ENCODE measurements at regions of chr20 and their contacts with region 1.

Region 1: GRCh38 chr20:46013826-46014516 is 5.3 kb downstream of the MMP9 start:
- DNase-seq: no peak

Region 2: DNA sequence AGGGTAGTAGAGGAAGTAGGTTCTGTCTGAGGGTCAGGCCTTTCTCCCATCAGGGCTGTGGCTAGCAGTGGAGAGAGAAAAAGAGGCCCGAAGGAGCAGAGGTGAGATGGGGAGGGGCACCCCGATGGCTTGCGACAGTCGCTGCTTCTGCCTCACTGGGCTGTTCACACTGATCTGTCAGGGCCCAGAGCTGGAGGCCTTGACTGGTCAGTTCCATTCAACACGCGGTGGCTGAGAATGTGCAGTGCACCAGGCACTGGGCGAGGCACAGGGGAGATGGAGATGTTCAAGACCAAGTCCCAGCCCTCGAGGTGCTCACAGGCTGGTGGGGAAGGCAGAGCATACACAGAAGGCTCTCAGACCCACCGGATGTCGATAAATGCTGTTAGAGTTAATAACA is 36.5 kb after region 1 on chr20:
- intact Hi-C with region 1: no loop called
- DNase-seq: no peak

Region 3: GRCh38 chr20:46089417-46090388 is 75.7 kb after region 1 on chr20 and contains the start of gene NCOA5:
- intact Hi-C with region 1: loop called (anchors 2 kb)
- DNase-seq: peak; percentile 98
- total RNA-seq, gene NCOA5: 12.3 TPM

Region 4: GRCh38 chr20:46174469-46175128 is 160.6 kb after region 1 on chr20:
- intact Hi-C with region 1: loop called (anchors 10 kb)
- DNase-seq: peak; percentile 87

Measured in cardiac septum (tissue), 1 donor.